IMR-90 (cell line): ENCODE measurements at regions of chr15 and their contacts with region 1.

Region 1: DNA sequence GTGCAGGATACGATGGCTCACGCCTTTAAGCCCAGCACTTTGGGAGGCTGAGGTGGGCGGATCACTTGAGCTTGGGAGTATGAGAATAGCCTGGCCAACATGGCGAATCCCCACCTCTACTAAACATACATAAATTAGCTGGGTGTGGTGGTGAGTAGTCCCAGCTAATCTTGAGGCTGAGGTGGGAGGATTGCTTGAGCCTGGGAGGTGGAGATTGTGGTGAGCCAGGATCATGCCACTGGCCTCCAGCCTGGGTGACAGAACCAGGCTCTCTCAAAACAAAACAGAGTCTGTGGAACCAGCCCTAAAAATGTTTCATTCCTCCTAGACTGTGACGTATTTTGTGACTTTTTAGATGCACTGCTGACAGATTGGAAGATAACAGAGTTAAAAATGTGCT is 34.3 kb upstream of the RAD51 start:
- DNase-seq: no peak
- ATAC-seq: no peak
- H3K4me3 ChIP-seq: no peak overlapping the region
- H3K27ac ChIP-seq: no peak overlapping the region
- H3K4me1 ChIP-seq: no peaks in the 10 kb centered on the region
- H3K27me3 ChIP-seq: no peaks in the 10 kb centered on the region
- CTCF ChIP-seq: no peak
- POLR2A ChIP-seq: no peak
- RAD21 ChIP-seq: no peak

Region 2: GRCh38 chr15:40640789-40641188 is 19.9 kb before region 1 on chr15:
- CTCF ChIA-PET with region 1: no interaction called
- POLR2A ChIA-PET with region 1: no interaction called
- dilution Hi-C with region 1: no loop called
- in situ Hi-C with region 1: no loop called
- intact Hi-C with region 1: loop called (anchors 2 kb)
- DNase-seq: no peak
- ATAC-seq: no peak
- H3K4me3 ChIP-seq: no peak overlapping the region
- H3K27ac ChIP-seq: no peak overlapping the region
- H3K4me1 ChIP-seq: no peaks in the 10 kb centered on the region
- H3K27me3 ChIP-seq: no peaks in the 10 kb centered on the region
- CTCF ChIP-seq: no peak
- POLR2A ChIP-seq: no peak
- RAD21 ChIP-seq: no peak

Region 3: DNA sequence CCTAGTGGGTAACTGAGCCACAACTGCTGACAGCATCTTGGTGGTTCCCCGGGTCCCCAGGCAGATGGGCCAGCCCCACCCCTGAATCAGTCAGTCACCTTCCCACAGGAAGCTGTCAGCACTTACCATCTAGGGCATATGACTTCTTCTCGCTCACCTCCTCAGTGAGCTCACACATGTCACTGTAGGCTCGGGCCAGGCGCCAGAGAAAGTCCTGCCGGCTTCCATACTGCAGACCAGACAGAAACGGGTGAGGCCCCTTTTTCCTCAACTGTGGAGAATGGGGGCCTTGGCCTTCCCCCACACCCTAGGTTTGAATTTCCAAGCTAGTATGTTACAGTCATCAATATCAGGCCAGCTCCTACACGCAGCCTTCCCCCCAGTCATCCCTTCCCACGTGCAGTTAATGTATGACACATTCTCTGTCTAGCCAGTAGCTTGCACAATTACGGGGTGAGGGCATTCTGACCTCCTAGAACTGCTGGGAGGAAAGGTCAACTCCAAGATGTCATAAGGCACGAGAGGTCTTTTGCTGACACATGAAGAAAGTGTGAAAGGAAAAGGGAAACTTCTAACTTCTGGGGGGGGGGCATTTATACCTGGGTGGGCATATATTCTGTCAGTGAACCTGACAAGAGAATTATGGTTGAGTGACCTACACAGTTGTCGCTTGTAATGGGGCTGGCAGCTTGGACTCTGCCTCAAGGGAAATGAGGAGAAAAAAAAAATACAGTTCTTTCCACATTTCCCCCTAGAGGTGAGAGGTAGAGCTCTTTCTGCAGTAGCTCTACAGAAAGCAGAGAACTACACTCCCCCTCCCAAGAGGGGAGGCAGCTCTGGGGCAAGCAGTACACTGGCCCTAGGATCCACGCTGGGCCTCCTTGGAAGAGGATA is 83.5 kb after region 1 on chr15:
- CTCF ChIA-PET with region 1: no interaction called
- POLR2A ChIA-PET with region 1: no interaction called
- dilution Hi-C with region 1: no loop called
- in situ Hi-C with region 1: no loop called
- intact Hi-C with region 1: no loop called
- DNase-seq: peak; percentile 82
- ATAC-seq: peak; percentile 82
- H3K4me3 ChIP-seq: no peak overlapping the region
- H3K27ac ChIP-seq: no peak overlapping the region
- H3K4me1 ChIP-seq: peaks cover 2% of the 10 kb centered on the region; the same call in 1 of the 2 replicates
- H3K27me3 ChIP-seq: no peaks in the 10 kb centered on the region
- CTCF ChIP-seq: no peak
- POLR2A ChIP-seq: no peak
- RAD21 ChIP-seq: no peak